Posterior vena cava (tissue), 2 donors: ENCODE measurements at regions of chrX and their contacts with region 1.

Region 1: DNA sequence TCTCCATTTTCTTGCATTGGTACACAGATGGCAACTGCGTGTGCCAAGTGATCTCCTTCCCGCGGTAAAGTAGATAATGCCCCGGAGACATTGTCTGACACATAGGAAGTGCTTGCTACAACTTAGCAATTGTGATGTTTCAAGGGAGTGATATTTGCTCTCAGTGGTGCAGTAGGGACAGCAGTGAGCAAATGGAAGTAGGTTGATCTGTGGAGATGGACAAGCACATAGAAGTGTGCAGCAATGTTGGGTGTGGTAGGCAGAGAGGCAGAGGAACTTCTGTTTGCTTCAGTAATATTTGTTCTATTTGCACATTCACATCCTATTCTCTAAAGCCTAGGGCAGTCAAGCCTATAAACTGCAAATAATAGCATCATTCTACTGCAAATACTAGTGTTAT is 846.7 kb upstream of the PRKX start:
- DNase-seq: no peak

Region 2: GRCh38 chrX:2974961-2975360 is 1585.2 kb before region 1 on chrX:
- intact Hi-C with region 1: no loop called
- DNase-seq: no peak

Region 3: GRCh38 chrX:4110964-4111363 is 449.2 kb before region 1 on chrX:
- intact Hi-C with region 1: no loop called
- DNase-seq: no peak

Region 4: DNA sequence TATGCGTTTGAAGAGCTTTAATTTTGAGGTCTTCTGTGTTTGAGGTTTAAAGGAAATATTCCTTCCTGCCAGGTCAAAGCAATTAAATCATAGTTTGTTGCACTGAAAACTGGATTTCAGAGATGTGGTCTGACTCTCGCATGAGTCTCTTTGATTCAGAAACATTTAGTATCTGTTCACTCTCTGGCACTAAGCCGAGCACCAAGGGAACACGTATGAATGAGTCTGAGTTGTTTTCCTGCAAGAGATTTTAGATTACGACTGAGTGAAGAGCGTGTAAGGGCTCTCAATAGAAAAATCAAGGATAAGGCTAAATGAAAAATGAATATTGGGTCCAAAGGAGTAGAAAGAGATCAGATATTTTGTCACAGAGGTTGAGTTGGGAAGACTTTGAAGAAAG is 28.7 kb after region 1 on chrX:
- intact Hi-C with region 1: loop called in 1 of 2 experiments (anchors 1 kb)
- DNase-seq: no peak

Region 5: DNA sequence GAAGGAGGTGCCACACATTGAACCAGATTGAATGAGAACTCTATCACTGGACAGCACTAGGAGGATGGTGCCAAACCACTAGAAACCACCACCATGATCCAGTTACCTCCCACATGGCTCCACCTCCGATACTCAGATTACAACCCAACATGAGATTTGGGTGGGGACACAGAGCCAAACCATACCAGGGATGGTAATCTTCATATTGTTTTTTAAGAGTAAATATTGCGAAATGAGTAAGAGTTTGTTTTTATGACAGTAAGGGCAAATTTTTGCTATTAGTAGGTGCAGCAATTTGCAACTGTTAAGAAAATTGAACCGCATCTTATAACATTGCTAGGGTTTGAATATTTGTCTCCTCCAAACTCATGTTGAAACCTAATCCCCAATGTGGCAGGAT is 777.0 kb after region 1 on chrX:
- intact Hi-C with region 1: loop called in 1 of 2 experiments (anchors 5 kb)
- DNase-seq: no peak